ENCODE measurements at regions of chr17 and their contacts with region 1.

Region 1: DNA sequence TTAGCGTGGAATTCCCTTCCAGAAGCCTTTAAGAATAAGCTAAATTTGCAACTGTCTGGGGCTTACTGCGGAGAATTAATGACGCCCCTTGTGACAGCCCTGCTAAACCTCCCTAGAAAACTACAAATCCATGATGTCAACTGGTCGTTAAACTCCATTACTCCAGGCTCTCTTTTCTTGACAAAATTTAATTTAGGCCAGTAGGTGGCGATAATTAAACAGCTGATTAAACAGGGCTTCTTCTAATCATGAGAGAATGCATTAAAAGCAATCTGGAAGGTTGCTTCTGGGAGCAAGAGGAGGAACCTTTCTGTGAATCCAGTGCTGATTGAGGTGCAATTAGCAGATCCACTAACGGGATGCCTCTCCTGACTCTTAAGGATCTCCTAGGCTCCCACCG is 8.1 kb upstream of the NLRP1 start:
- DNase-seq: no peak
- ATAC-seq: peak; percentile 38
- H3K4me3 Mint-ChIP-seq: no peak overlapping the region
- H3K27ac Mint-ChIP-seq: no peak overlapping the region
- H3K4me1 Mint-ChIP-seq: peaks cover under 1% of the 10 kb centered on the region
- H3K27me3 Mint-ChIP-seq: peaks cover 20% of the 10 kb centered on the region

Region 2: GRCh38 chr17:5706577-5707216 is 114.3 kb after region 1 on chr17:
- CTCF ChIA-PET with region 1: interaction called, 20 read pairs
- POLR2A ChIA-PET with region 1: no interaction called
- DNase-seq: peak; percentile 65
- ATAC-seq: no peak
- H3K4me3 Mint-ChIP-seq: no peak overlapping the region
- H3K27ac Mint-ChIP-seq: no peak overlapping the region
- H3K4me1 Mint-ChIP-seq: no peaks in the 10 kb centered on the region
- H3K27me3 Mint-ChIP-seq: peaks cover 22% of the 10 kb centered on the region

Region 3: DNA sequence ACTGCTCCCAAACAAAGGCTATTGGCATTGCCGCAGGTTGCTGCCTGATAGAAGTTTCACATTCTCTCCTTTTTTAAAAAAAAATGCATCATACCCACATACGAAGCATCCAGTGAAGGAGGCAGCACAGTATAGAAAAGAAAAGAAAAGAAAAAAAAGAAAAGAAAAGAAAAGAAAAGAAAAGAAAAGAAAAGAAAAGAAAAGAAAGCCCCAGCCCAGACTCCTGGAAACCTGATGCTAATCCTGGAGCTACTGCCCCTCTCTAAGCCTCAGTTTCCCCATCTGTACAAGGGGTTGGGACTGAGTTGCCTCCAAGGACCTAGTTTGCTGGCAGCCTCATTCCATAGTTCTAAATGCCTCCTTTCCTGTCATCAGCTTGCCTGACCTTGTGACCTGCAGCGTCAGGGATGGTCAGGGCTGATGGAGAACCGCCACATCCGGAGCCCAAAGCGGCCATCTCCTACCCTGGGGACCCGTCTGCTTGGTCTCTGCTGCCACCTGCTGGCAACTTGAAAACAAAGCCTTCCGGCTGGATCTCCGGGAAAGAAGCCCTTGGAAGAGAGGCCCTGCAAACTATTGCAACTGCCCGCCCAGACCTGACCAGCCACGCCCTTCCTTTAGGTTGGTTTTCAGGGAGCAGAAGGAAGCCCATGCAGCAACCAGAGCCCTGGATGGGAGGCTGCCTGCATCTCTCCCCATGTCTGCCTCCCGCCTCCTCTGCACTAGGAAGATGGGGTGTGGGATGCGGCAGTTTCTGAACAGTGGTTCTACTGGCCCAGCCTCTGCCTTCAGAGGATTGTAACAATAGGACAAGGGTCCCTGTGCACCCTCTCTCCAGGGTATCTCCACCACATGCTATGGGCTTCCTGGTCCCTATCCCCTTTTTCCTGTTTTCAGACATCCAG is 829.6 kb after region 1 on chr17:
- CTCF ChIA-PET with region 1: interaction called, 17 read pairs
- POLR2A ChIA-PET with region 1: no interaction called
- DNase-seq: peak; percentile 81
- ATAC-seq: peak; percentile 79
- H3K4me3 Mint-ChIP-seq: no peak overlapping the region
- H3K27ac Mint-ChIP-seq: no peak overlapping the region
- H3K4me1 Mint-ChIP-seq: peaks cover 5% of the 10 kb centered on the region
- H3K27me3 Mint-ChIP-seq: peaks cover 40% of the 10 kb centered on the region

Region 4: GRCh38 chr17:6435968-6436367 is 843.6 kb after region 1 on chr17:
- CTCF ChIA-PET with region 1: interaction called, 15 read pairs
- POLR2A ChIA-PET with region 1: no interaction called
- DNase-seq: peak; percentile 76
- ATAC-seq: peak; percentile 92
- H3K4me3 Mint-ChIP-seq: no peak overlapping the region
- H3K27ac Mint-ChIP-seq: no peak overlapping the region
- H3K4me1 Mint-ChIP-seq: no peaks in the 10 kb centered on the region
- H3K27me3 Mint-ChIP-seq: peaks cover 59% of the 10 kb centered on the region